AG04450 (cell line): ENCODE measurements at regions of chr17 and their contacts with region 1.

Region 1: DNA sequence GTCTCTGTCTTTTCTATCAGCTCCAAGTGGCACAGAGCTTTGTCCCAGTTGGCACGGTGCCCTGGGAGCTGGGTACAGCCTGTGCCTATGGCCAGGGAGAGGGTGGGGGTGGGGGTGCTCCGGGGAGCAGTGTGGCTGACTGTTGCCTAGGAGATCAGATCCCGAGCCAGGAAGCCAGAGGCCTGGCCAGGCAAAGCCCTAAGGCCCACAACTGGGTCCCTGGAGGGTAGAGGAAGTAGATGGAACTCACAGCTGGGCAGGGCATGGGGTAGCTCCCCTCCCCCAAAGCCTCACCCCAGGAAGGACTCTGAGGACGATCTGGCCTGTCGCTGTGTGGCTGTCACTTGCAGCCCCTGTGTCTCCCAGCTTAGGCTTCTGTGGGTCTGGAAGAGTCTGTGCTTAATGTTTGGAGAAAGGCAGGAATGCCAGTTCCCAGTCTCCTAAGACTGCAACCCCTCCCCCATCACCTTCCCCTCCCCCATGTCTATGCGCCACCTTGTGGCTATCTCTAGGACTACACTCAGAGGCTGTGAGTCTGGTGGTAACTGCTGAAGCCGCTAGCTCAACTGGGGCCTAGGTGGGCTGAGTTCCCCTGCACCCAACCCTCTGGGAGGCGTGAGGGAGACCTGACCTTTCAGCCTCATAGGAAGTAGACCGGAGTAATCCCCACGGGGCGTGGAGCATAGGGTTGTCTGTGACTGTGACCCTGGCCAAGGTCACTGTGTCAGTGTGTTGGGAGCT is 12.6 kb downstream of the THRA start:
- DNase-seq: no peak
- H3K4me3 ChIP-seq: no peak overlapping the region
- H3K27ac ChIP-seq: no peak overlapping the region
- H3K27me3 ChIP-seq: no peaks in the 10 kb centered on the region
- CTCF ChIP-seq: peak; percentile 91

Region 2: GRCh38 chr17:40015005-40015997 is 60.1 kb before region 1 on chr17 and contains the start of gene CSF3:
- CTCF ChIA-PET with region 1: interaction called, 24 read pairs
- POLR2A ChIA-PET with region 1: interaction called, 5 read pairs
- DNase-seq: no peak
- H3K4me3 ChIP-seq: no peak within 1 kb of the TSS
- H3K27ac ChIP-seq: peak within 1 kb of the TSS; percentile 2
- H3K27me3 ChIP-seq: no peaks in the 10 kb centered on the region
- CTCF ChIP-seq: no peak
- polyA plus RNA-seq, gene CSF3: 0.05 TPM in 1 of 2 replicates, not detected in the other

Region 3: DNA sequence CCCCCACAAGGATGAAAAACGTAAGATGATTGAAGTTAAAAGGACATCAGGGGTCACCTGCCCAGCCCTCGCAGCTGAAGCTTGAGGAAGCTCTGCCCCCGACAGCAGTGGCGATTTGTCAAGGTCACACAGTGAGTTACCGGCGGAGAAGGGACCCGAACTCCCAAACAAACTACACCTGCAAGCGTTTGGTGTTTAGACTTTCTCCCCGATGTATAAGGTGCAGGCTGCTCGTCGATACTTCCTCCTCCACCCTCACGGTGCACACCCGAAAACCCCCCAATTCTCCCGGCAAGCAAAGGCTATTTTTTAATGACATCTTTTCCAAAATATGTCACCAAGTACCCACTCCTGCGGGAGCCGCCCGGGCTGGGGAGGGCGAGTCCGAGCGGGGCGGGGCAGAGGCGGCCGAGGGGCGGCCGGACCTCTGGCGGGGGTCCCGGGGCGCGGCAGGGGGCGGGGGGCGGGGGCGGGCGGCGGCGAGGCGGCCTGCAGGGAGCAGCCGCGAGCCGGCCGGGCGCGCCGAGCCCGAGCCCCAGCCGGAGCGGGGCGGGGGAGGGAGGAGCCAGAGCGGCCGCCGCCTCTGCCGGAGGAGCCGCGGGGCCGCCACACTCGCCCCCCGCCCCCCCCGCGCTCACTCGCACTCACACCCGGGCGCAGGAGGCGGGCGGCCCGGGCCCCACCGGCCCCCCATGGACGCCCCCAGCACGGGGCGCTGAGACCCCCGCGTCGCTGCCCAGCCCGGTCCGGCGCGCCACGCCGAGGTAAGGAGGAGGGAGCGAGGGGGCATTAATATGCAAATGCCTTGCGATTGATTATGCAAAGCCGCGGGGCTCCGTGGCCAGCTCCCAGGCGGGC is 12.8 kb before region 1 on chr17 and contains the start of gene THRA:
- CTCF ChIA-PET with region 1: interaction called, 60 read pairs
- POLR2A ChIA-PET with region 1: interaction called, 4 read pairs
- DNase-seq: no peak
- H3K4me3 ChIP-seq: peak within 1 kb of the TSS; percentile 90
- H3K27ac ChIP-seq: no peak within 1 kb of the TSS
- H3K27me3 ChIP-seq: peaks cover 3% of the 10 kb centered on the region
- CTCF ChIP-seq: 0 out of 2 replicates have a peak, but pooled peaks have one; percentile 15
- polyA plus RNA-seq, gene THRA: 25.2 and 32.0 TPM in 2 replicates

Region 4: DNA sequence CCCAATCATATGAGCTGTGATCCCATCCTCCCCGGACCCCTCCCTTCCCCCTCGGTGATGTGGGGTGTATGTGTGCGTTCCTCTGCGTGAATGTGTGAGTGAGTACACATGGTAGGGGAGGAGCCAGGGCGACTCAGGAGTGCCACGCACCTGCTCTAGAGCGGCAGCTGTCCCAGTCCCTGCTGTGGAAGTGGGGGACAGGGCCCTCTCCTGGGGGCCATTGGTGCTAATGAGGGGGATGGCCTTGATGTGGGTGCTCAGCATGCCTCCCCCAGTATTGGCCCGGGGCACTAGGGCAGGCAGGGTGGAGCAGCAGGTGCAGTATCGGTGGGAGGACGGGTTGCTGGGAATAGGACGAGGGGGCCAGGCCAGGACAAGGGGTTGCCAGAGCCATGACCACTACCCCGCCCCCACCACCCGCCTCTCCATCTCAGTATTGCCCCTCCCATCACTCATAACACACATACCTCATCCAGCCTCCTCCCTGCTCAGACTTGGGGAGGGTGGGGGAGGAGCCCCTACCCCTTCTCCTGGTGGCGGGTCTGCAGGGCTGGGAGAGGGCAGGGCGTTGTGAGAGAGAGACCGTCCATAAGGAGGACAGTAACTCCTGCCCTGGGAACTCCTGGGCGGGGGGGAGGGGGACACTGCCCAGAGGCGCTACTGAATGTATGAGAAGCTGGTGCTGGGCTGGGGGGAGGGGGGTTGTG is 16.5 kb after region 1 on chr17:
- CTCF ChIA-PET with region 1: interaction called, 58 read pairs
- POLR2A ChIA-PET with region 1: no interaction called
- DNase-seq: no peak
- H3K4me3 ChIP-seq: no peak overlapping the region
- H3K27ac ChIP-seq: no peak overlapping the region
- H3K27me3 ChIP-seq: no peaks in the 10 kb centered on the region
- CTCF ChIP-seq: no peak

Region 5: DNA sequence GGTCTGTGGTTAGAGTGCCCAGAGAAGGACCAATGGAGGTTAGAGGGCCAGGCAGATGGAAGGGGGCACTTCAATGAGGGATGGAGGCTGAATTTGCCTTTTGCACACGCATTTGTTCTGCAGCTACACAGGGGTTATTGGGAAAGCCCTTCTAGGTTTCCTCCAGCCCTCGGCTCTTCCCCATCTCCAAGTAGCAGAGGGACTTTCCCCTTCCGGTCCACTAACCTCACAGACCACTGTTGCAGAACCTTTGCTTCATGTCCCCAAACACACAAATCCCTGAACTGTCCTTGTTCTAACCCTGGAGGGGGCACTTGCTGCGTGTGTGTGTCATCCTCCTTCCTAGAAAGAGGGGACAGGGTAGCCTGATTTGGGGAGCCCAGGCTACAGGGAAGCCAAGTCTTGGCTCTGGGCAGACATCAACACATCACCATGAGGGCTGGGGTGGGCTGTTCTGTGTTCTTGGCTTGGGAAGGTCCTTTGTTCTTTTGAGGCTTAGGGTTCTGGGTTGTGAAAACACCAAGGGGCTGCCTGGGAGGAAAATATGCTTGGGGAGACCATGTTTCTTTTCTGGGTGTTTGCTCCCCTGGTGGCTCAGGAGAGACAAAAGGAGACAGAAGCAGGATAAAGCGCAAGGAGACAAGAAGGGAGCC is 32.3 kb after region 1 on chr17:
- CTCF ChIA-PET with region 1: interaction called, 47 read pairs
- POLR2A ChIA-PET with region 1: interaction called, 3 read pairs
- DNase-seq: no peak
- H3K4me3 ChIP-seq: no peak overlapping the region
- H3K27ac ChIP-seq: peak overlapping the region; percentile 93
- H3K27me3 ChIP-seq: no peaks in the 10 kb centered on the region
- CTCF ChIP-seq: 0 out of 2 replicates have a peak, but pooled peaks have one; percentile 1

Region 6: GRCh38 chr17:40121181-40122135 is 46.1 kb after region 1 on chr17 and contains the start of gene MSL1:
- CTCF ChIA-PET with region 1: interaction called, 10 read pairs
- POLR2A ChIA-PET with region 1: no interaction called
- DNase-seq: no peak
- H3K4me3 ChIP-seq: peak within 1 kb of the TSS; percentile 97
- H3K27ac ChIP-seq: peak within 1 kb of the TSS; percentile 85
- H3K27me3 ChIP-seq: no peaks in the 10 kb centered on the region
- CTCF ChIP-seq: no peak
- polyA plus RNA-seq, gene MSL1: 69.8 and 92.2 TPM in 2 replicates

Region 7: DNA sequence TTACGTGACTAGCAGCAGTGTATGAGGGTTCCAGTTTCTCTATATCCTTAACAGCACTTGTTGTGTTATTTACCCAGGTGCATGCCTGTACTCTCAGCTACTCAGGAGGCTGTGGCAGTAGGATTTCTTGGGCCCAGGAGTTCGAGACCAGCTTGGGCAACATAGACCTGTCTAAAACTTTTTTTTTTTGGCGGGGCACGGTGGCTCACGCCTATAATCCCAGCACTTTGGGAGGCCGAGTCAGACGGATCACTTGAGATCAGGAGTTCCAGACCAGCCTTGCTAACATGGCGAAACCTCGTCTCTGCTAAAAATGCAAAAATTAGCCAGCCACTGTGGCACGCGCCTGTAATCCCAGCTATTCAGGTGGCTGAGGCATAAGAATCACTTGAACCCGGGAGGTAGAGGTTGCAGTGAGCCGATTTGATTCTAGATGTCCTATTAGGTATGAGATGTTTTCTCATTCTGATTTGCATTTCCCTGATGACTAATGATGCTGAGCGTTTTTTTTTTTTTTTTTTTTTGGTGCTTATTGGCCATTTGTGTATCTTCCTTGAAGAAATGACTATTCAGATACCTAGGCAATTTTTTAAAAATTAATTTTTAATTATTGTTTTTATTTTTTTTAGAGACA is 78.3 kb after region 1 on chr17:
- CTCF ChIA-PET with region 1: no interaction called
- POLR2A ChIA-PET with region 1: no interaction called
- DNase-seq: no peak
- H3K4me3 ChIP-seq: no peak overlapping the region
- H3K27ac ChIP-seq: no peak overlapping the region
- H3K27me3 ChIP-seq: no peaks in the 10 kb centered on the region
- CTCF ChIP-seq: no peak

Region 8: DNA sequence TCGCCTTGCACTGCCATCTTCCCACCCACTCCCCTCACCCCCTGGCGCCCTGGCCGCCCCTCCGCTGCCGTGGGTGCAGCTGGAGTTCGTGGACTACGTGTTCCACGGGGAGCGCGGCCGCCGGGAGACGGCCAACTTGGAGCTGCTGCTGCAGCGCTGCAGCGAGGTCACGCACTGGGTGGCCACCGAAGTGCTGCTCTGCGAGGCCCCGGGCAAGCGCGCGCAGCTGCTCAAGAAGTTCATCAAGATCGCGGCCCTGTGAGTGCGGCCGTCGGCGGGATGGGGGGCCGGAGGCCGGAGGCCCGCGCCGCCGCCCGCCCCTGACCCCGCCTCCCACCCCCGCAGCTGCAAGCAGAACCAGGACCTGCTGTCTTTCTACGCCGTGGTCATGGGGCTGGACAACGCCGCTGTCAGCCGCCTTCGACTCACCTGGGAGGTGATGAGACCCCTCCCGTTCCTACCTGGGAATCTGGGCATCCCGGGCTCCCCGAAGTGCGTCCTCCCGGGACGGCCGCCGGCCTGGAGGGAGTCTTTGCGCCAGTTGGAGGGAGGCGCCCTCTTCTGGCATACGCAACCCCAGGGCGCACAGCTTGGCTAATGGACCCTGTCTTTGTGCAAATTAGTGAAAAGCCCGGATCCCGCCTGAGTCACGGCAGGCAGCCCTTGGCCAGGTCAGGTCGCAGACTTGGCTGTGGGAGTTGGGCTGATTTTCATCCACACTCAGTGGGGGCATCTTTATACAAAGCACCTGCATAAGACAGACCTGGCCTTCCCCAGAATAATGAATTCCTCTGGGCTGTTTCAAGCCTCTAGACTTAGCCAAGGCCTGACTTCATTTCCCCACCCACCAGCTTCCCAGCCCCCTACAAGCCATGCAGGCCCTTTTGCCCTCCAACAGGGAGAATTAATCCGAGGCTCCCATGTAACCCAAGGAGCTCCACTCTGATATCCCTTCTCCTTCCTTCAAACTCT is 116.2 kb after region 1 on chr17:
- CTCF ChIA-PET with region 1: no interaction called
- POLR2A ChIA-PET with region 1: no interaction called
- DNase-seq: no peak
- H3K4me3 ChIP-seq: peak overlapping the region; percentile 61
- H3K27ac ChIP-seq: peak overlapping the region; percentile 61
- H3K27me3 ChIP-seq: no peaks in the 10 kb centered on the region
- CTCF ChIP-seq: peak; percentile 76